ENCODE measurements at regions of chr17 and their contacts with region 1.

Region 1: DNA sequence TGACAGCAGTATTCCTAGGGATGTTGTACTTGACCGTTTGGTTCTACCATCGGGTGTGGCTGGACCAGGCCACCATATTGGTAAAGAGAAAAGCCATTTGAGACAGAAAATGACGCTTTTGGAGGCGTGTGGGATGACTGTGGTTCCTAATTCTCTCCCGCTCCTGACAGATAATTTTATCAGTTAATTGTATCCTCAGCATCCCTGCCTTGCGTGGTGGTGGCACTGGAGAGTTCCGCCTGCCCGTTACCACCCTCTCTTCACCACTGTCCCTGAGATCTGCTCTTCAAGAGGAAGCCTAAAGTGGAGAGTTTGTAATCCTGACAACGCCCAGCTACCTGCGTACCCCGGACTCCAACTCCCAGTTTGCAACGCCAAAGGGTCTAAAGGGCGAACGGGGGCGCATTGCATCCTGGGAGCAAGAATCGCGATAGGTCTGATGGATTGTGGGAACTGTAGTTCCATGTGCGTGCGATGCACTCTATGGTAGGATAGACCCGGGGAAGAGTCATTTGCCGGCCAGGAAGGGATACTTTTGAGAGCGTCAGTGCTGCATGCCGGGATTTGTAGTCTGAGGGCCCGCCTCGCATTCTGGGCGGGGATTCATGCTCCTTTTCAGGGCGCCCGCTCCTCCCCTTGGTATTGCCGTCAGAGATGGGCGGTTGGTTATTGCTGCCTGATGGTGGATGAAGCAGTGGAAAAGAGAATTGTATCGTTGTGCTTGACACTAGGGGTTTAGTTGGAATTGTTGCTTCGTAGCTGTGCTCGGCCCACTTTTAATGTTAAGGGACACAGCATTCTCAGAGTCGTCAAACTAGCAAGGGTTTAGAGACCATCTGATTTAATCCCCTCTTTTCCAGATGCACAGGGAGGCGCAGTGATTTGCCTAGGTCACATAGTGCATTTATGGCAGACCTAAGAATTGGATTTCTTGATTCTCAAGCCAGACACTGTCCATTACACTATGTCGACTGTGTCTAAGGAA is 965 bp upstream of the PHF12 start:
- DNase-seq: peak; percentile 97
- H3K4me3 Mint-ChIP-seq: no peak overlapping the region
- H3K27ac Mint-ChIP-seq: no peak overlapping the region
- H3K4me1 Mint-ChIP-seq: peaks cover 14% of the 10 kb centered on the region
- H3K27me3 Mint-ChIP-seq: no peaks in the 10 kb centered on the region

Region 2: GRCh38 chr17:28710861-28711722 is 241.2 kb before region 1 on chr17:
- CTCF ChIA-PET with region 1: no interaction called
- POLR2A ChIA-PET with region 1: interaction called, 17 read pairs
- DNase-seq: peak; percentile 92
- H3K4me3 Mint-ChIP-seq: peak overlapping the region; percentile 80
- H3K27ac Mint-ChIP-seq: peak overlapping the region; percentile 90
- H3K4me1 Mint-ChIP-seq: peaks cover 22% of the 10 kb centered on the region
- H3K27me3 Mint-ChIP-seq: peaks cover 17% of the 10 kb centered on the region

Region 3: DNA sequence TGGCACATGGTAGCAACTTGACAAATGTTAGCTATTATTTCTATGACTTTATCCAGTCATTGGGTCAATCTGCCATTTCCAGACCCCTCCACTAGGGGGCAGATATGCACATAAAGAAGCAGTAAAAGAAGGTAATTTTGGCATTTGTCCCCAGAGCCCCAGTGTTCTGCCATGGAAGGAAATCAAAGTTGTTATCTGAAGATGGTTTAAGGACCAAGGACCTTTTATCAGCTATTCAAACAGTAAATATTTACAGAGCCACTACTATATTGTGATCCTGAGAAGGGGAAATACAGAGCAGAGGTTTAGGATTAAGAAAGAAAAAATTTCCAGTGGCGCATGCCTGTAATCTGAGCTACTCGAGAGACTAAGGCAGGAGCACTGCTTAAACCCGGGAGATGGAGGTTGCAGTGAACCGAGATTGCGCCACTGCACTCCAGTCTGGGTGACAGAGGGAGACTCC is 188.4 kb before region 1 on chr17:
- CTCF ChIA-PET with region 1: interaction called, 19 read pairs
- POLR2A ChIA-PET with region 1: interaction called, 4 read pairs
- DNase-seq: peak; percentile 79
- H3K4me3 Mint-ChIP-seq: no peak overlapping the region
- H3K27ac Mint-ChIP-seq: no peak overlapping the region
- H3K4me1 Mint-ChIP-seq: peaks cover 28% of the 10 kb centered on the region
- H3K27me3 Mint-ChIP-seq: no peaks in the 10 kb centered on the region

Region 4: GRCh38 chr17:28896884-28897768 is 55.2 kb before region 1 on chr17 and contains the start of gene FLOT2:
- CTCF ChIA-PET with region 1: interaction called, 37 read pairs
- POLR2A ChIA-PET with region 1: interaction called, 21 read pairs
- DNase-seq: peak; percentile 69
- H3K4me3 Mint-ChIP-seq: peak within 1 kb of the TSS; percentile 96
- H3K27ac Mint-ChIP-seq: peak within 1 kb of the TSS; percentile 95
- H3K4me1 Mint-ChIP-seq: peaks cover 78% of the 10 kb centered on the region
- H3K27me3 Mint-ChIP-seq: no peaks in the 10 kb centered on the region
- total RNA-seq, gene FLOT2: 193 to 200 TPM

Region 5: DNA sequence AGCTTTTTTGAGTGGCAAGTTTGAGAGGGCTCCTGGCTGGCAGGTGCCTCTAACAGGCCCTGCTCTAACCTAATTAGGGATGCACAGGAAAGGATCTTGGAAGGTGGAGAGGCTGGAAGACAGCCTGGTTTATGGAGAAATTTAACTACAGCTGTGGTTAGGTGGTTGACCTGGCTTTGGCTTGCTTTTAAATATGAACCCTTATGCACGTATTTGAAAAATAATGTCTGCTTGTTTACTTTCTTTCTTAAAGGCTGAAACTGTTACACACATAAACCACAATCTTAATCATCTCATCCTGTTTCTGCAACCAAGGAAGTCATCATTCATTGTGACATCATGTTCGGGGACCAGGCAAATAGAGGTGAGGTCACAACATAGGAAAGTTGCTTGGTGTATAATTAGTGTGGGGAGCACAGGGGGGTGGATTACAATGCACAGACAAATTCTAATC is 26.3 kb before region 1 on chr17:
- CTCF ChIA-PET with region 1: interaction called, 5 read pairs
- POLR2A ChIA-PET with region 1: interaction called, 59 read pairs
- DNase-seq: peak; percentile 59
- H3K4me3 Mint-ChIP-seq: peak overlapping the region; percentile 43
- H3K27ac Mint-ChIP-seq: peak overlapping the region; percentile 78
- H3K4me1 Mint-ChIP-seq: peaks cover 48% of the 10 kb centered on the region
- H3K27me3 Mint-ChIP-seq: no peaks in the 10 kb centered on the region

Region 6: GRCh38 chr17:29116804-29117772 is 164.8 kb after region 1 on chr17:
- CTCF ChIA-PET with region 1: interaction called, 28 read pairs
- POLR2A ChIA-PET with region 1: interaction called, 6 read pairs
- DNase-seq: peak; percentile 80
- H3K4me3 Mint-ChIP-seq: no peak overlapping the region
- H3K27ac Mint-ChIP-seq: no peak overlapping the region
- H3K4me1 Mint-ChIP-seq: peaks cover 4% of the 10 kb centered on the region
- H3K27me3 Mint-ChIP-seq: no peaks in the 10 kb centered on the region